Motor neuron (in vitro differentiated cells): ENCODE measurements at regions of chr6 and their contacts with region 1.

Region 1: DNA sequence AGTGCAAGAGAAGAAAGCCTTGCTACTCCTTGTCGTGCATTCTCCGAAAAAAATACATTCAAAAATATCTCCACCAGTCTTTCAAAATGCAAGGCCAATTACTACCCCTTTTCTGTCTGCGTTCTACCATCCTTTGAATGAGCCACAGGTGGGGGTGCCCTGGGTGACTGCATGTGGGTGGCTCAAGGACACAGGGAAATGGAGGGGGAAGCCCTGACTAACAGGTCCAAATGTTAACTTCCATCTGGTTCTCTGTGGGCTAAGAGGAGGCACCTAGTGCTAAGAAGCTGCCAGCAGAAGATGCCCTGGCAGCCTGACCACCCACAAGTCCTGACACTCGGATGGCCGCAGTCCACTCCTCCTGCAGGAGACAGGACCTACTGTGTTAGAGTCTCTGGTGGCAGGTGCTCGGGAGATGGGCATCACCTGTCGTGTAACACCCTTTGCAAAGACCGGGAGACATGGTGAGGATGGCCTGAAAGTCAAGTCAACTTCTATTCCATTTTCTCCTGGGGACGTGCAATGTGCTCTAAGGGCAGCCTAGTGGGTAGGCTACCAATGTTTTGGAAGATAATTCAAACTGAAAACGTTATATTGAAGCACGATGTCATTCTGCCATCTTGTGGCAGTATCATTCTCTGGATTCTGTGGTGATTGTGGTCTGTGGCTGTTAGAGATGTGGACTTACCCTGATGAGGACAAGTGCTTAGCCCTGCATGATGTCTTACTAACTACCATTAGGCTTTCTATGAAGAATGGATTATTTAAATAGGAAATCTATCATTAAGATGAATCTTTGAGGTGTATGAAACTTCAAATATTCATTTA is 27.4 kb upstream of the IGF2R start:
- ATAC-seq: peak in 3 of 8 experiments; percentile 74 to 89 (median 78)
- H3K4me3 ChIP-seq: no peak overlapping the region
- H3K27ac ChIP-seq: no peak overlapping the region
- H3K4me1 ChIP-seq: no peaks in the 10 kb centered on the region

Region 2: DNA sequence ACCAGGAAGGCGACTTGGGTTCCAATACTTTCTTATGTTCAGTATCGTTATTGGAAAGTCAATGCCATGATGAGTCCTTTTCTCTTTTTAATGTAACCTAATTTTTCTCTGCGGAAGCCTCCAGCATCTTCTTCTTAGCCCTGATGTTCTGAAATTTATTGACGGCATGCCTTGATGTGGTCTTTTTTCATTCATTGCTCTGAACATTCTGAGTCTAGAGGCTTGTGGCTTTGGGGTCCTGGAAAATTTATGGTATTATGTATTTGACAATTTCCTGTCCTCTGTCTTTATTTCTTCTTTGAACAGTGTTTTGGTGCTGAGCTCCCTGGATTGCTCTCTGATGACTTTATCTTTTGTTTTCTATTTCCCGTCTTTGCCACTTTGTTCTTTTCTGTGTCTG is 79.4 kb before region 1 on chr6:
- in situ Hi-C with region 1: loop called in 1 of 9 experiments (anchors 10 kb)
- ATAC-seq: no peak
- H3K4me3 ChIP-seq: no peak overlapping the region
- H3K27ac ChIP-seq: no peak overlapping the region
- H3K4me1 ChIP-seq: no peaks in the 10 kb centered on the region

Region 3: GRCh38 chr6:160178271-160178670 is 236.8 kb after region 1 on chr6:
- in situ Hi-C with region 1: no loop called
- ATAC-seq: peak in 1 of 8 experiments; percentile 7
- H3K4me3 ChIP-seq: no peak overlapping the region
- H3K27ac ChIP-seq: no peak overlapping the region
- H3K4me1 ChIP-seq: peaks cover 2 to 4% of the 10 kb centered on the region in 2 donors

Region 4: DNA sequence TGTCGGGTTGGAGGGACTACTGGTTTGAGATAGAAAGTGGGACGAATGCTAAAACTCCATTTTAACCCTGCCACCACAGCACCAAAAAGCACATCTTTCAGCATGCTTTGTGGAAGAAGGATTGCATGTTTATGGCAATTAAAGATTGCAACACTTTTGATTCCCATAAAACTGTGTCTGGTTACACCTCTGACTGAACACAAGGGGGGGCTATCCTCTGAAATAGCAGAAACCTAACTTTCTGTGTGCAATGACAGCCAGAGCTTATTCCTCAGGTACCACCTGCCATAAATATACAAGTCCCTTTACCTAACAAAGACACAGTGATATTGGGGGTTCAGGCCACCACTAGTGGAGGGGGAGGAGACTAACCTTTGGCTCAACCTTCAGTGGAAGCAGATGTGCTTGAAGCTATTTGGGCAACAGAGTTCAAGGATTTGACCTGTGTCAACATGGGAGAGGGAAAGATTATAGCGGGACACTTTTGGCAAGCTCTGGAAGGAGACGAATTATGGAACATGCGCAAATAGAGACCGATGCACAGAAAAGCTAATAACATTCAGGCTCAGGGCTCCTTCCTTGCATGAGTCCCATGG is 751.0 kb after region 1 on chr6:
- in situ Hi-C with region 1: no loop called
- ATAC-seq: peak in 3 of 8 experiments; percentile 23 to 50 (median 30)
- H3K4me3 ChIP-seq: no peak overlapping the region
- H3K27ac ChIP-seq: no peak overlapping the region
- H3K4me1 ChIP-seq: no peaks in the 10 kb centered on the region